Heart right ventricle (tissue), 16 donors: ENCODE measurements at regions of chr14 and their contacts with region 1.

Region 1: GRCh38 chr14:103444837-103445524 is 59.8 kb downstream of the MARK3 start:
- DNase-seq: no peak
- ATAC-seq: peak in 4 of 8 donors; percentile 47 to 84 (median 70)
- H3K4me3 ChIP-seq: no peak overlapping the region
- H3K27ac ChIP-seq: peak overlapping the region in 6 of 10 donors; percentile 5 to 52 (median 24)
- H3K4me1 ChIP-seq: peaks cover 7 to 67% (median 53%) of the 10 kb centered on the region in 9 donors
- H3K27me3 ChIP-seq: no peaks in the 10 kb centered on the region
- CTCF ChIP-seq: no peak

Region 2: GRCh38 chr14:102819747-102820330 is 625.1 kb before region 1 on chr14:
- intact Hi-C with region 1: loop called in 1 of 10 experiments (anchors 10 kb)
- DNase-seq: no peak
- ATAC-seq: no peak
- H3K4me3 ChIP-seq: no peak overlapping the region
- H3K27ac ChIP-seq: no peak overlapping the region
- H3K4me1 ChIP-seq: peaks cover 0 to 19% (median 2%) of the 10 kb centered on the region in 9 donors
- H3K27me3 ChIP-seq: no peaks in the 10 kb centered on the region
- CTCF ChIP-seq: no peak